BJ (cell line): ENCODE measurements at regions of chr18 and their contacts with region 1.

Region 1: DNA sequence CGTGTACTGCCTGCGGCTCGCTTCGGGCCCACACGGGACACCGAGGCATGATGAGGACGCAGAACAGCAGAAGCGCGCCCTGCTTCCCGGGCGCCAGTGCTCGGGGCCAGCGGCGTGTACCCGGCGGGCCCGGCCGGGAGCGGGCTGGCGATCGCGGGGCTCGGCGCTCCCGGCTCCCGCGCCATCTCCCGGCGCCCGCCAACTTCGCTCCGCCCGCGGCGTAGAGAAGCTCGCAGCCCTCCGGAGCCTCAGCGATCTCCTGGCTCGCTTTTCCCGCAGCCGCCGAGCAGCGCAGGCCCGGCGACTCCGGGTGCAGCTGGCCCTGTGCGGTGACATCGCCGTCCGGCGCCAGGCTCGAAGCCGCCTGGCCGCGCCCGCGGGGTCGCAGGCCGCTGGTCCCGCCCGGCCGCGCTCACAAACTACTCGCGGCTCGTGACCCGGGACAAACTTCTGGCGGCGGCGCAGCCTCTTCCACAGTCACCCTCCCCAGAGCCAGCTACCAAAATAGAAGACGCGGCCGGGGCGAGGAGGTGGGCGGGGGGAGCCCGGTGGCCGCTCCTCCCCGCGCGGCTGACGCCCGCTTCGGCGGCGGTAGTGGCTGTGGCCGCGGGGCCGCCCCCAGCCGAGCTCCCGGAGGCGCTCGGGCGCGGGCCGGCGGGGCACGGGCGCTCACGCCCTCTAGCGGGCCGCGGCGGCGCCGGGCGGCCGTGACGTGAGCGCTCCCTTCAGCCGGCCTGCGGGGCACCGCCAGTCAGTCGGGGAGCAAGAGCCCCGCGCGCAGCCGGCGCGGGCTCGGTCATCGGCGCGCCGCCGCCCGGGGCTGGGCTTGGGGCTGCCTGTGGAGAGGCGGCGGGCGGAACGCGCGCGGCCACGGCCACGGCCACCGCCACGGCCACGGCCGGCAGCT is at the start of gene PTPRM:
- DNase-seq: no peak
- H3K4me3 ChIP-seq: peak within 1 kb of the TSS; percentile 91
- H3K27me3 ChIP-seq: no peaks in the 10 kb centered on the region
- CTCF ChIP-seq: no peak
- polyA plus RNA-seq, gene PTPRM: 149 TPM in 2 replicates

Region 2: GRCh38 chr18:7272311-7273049 is 294.3 kb before region 1 on chr18:
- CTCF ChIA-PET with region 1: interaction called, 11 read pairs
- POLR2A ChIA-PET with region 1: no interaction called
- DNase-seq: no peak
- H3K4me3 ChIP-seq: no peak overlapping the region
- H3K27me3 ChIP-seq: no peaks in the 10 kb centered on the region; the same call in 1 of the 2 replicates
- CTCF ChIP-seq: peak; percentile 53

Region 3: DNA sequence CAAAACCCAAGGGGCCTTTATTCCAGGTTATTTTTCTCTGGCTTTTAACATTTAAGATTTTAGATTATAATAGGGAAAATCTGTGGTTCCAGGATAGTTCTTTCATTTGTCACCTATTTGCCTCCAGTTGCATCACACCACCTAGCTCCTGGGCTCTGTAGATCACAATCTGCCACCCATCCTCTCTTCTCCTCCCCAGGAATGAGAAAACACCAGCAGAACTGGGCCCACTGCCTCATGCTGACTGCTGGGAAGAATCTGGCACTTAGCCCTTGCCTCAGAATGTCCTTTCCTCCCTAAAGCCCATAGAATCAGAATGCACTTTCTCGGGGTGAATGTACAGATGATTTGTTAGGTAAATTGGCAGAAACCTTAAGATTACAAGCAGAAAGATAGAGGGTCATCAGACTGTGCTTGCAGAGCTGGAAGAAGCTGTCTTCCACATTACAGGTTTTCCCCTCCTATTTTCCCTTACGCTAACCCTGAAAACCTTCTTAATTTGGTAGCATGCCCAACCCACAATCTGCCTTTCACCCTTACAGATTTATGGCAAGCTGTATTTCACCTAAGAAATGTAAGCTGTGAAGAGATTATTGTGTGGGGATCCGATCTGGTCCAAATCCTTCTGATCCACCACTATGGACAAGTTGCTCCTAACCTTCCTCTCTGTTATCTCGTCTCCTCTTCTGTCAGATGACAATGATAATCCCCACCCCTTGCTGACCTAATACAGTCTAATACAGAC is 263.3 kb before region 1 on chr18:
- CTCF ChIA-PET with region 1: no interaction called
- POLR2A ChIA-PET with region 1: no interaction called
- DNase-seq: no peak
- H3K4me3 ChIP-seq: no peak overlapping the region
- H3K27me3 ChIP-seq: no peaks in the 10 kb centered on the region
- CTCF ChIP-seq: no peak

Region 4: DNA sequence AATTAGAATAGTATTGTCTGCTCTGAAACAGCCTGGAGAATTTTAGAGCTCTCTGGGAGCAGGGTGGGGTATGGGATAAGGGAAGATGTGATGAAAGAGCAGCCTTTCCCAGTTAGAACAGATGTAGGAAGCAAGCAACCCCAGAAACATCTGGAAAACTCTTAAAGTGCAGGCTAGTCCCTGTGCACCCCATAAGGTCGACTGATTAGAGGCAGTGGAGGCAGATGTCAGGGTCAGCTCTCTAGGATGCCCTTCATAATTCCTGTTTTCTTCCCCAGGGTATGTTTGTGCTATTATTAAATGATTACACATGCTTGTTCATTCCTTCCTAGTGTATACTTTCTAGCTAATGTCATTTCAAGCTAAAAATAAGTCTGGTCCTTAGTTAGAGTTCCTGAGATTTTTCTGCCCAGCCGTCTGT is 42.0 kb after region 1 on chr18:
- CTCF ChIA-PET with region 1: interaction called, 14 read pairs
- POLR2A ChIA-PET with region 1: no interaction called
- DNase-seq: peak; percentile 70
- H3K4me3 ChIP-seq: no peak overlapping the region
- H3K27me3 ChIP-seq: no peaks in the 10 kb centered on the region
- CTCF ChIP-seq: no peak

Region 5: GRCh38 chr18:7617738-7618422 is 51.1 kb after region 1 on chr18:
- CTCF ChIA-PET with region 1: interaction called, 10 read pairs
- POLR2A ChIA-PET with region 1: interaction called, 3 read pairs
- DNase-seq: peak; percentile 93
- H3K4me3 ChIP-seq: no peak overlapping the region
- H3K27me3 ChIP-seq: no peaks in the 10 kb centered on the region
- CTCF ChIP-seq: no peak

Region 6: DNA sequence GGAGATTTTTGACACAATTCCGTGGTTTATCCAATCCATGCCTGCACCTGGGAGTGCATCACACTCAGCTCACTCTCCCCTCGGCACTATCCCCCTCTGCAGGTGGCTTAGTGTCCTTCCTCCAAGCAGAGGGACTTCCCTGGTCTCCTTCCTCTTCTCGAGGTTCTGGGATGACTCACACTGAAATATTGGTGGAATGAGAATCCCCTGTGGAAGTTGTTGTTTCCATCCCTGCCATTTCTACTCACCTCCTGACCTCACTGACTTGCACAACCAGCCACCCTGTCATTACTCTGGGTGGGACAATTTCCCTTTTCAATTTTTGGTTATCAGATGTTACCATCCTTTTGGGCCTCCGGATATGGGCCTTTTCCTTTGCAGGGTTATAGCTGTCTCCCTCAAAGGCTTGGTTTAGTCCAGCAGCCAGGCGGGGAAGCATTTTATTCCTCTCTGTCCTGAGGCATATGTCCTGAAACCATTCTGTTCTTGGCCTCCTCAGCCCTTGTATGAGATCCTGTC is 60.2 kb after region 1 on chr18:
- CTCF ChIA-PET with region 1: interaction called, 18 read pairs
- POLR2A ChIA-PET with region 1: interaction called, 4 read pairs
- DNase-seq: no peak
- H3K4me3 ChIP-seq: no peak overlapping the region
- H3K27me3 ChIP-seq: no peaks in the 10 kb centered on the region
- CTCF ChIP-seq: peak; percentile 51